ENCODE measurements at regions of chr14 and their contacts with region 1.

Region 1: GRCh38 chr14:55446218-55446654 is 5.8 kb upstream of the TBPL2 start:
- DNase-seq: peak; percentile 42
- H3K4me3 ChIP-seq: no peak overlapping the region
- H3K27ac ChIP-seq: peak overlapping the region; percentile 55
- H3K27me3 ChIP-seq: no peaks in the 10 kb centered on the region
- CTCF ChIP-seq: peak; percentile 80

Region 2: GRCh38 chr14:54329082-54329695 is 1117.0 kb before region 1 on chr14:
- CTCF ChIA-PET with region 1: no interaction called
- POLR2A ChIA-PET with region 1: no interaction called
- DNase-seq: no peak
- H3K4me3 ChIP-seq: no peak overlapping the region
- H3K27ac ChIP-seq: no peak overlapping the region
- H3K27me3 ChIP-seq: peaks cover 26% of the 10 kb centered on the region
- CTCF ChIP-seq: peak; percentile 91

Region 3: GRCh38 chr14:54566410-54567223 is 879.6 kb before region 1 on chr14 and contains the start of gene SAMD4A:
- CTCF ChIA-PET with region 1: no interaction called
- POLR2A ChIA-PET with region 1: no interaction called
- DNase-seq: peak; percentile 71
- H3K4me3 ChIP-seq: peak within 1 kb of the TSS; percentile 80
- H3K27ac ChIP-seq: peak within 1 kb of the TSS; percentile 86
- H3K27me3 ChIP-seq: no peaks in the 10 kb centered on the region
- CTCF ChIP-seq: peak; percentile 46
- polyA plus RNA-seq, gene SAMD4A: 12.7 and 21.0 TPM in 2 replicates

Region 4: GRCh38 chr14:55062517-55063351 is 383.5 kb before region 1 on chr14:
- CTCF ChIA-PET with region 1: no interaction called
- POLR2A ChIA-PET with region 1: no interaction called
- DNase-seq: no peak
- H3K4me3 ChIP-seq: no peak overlapping the region
- H3K27ac ChIP-seq: no peak overlapping the region
- H3K27me3 ChIP-seq: no peaks in the 10 kb centered on the region
- CTCF ChIP-seq: no peak

Region 5: DNA sequence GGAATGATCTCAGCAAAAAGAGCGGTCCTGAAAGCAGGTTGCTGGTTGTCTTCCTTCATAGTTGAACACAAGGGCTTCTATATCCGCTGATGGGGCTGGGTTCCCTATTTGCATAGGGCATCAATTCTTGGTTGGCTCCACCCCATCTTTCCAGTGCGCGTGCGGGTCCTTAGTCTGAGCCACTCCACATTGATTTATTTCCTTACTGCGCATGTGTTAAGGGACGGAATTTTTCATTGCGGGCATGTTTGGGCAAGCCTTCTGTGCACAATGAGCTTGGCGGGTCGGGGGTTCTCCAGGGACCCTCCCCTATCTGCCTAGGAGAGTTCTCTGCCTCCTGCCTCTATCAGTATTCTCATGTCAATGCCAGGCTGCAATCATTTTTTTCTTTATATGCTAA is 233.6 kb before region 1 on chr14:
- CTCF ChIA-PET with region 1: interaction called, 21 read pairs
- POLR2A ChIA-PET with region 1: no interaction called
- DNase-seq: no peak
- H3K4me3 ChIP-seq: no peak overlapping the region
- H3K27ac ChIP-seq: no peak overlapping the region
- H3K27me3 ChIP-seq: no peaks in the 10 kb centered on the region
- CTCF ChIP-seq: no peak

Region 6: GRCh38 chr14:55540847-55541766 is 94.9 kb after region 1 on chr14:
- CTCF ChIA-PET with region 1: interaction called, 12 read pairs
- POLR2A ChIA-PET with region 1: no interaction called
- DNase-seq: no peak
- H3K4me3 ChIP-seq: no peak overlapping the region
- H3K27ac ChIP-seq: no peak overlapping the region
- H3K27me3 ChIP-seq: no peaks in the 10 kb centered on the region
- CTCF ChIP-seq: no peak

Region 7: GRCh38 chr14:55588259-55588699 is 142.0 kb after region 1 on chr14:
- CTCF ChIA-PET with region 1: interaction called, 18 read pairs
- POLR2A ChIA-PET with region 1: no interaction called
- DNase-seq: no peak
- H3K4me3 ChIP-seq: no peak overlapping the region
- H3K27ac ChIP-seq: no peak overlapping the region
- H3K27me3 ChIP-seq: no peaks in the 10 kb centered on the region
- CTCF ChIP-seq: no peak

Region 8: GRCh38 chr14:55614304-55614703 is 168.1 kb after region 1 on chr14:
- CTCF ChIA-PET with region 1: interaction called, 10 read pairs
- POLR2A ChIA-PET with region 1: no interaction called
- DNase-seq: no peak
- H3K4me3 ChIP-seq: no peak overlapping the region
- H3K27ac ChIP-seq: no peak overlapping the region
- H3K27me3 ChIP-seq: no peaks in the 10 kb centered on the region
- CTCF ChIP-seq: no peak

Region 9: DNA sequence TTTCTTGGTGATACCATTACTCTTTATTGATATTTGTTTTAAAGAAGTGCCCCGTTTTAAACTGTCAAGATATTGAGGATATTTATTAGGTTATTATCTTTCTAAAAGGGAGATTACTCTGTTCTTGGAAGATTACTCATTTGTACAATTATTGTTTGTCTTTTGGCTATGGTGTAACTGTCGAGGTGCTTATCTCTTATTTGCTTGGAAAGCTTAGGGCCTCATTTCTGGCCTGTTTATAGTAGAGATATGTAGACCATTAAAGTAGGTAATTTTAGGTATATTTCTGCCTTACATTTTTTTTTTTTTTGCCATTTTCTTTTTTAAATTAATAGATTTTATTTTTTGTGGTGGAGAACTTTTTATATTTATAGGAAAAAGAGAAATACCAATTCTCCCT is 208.0 kb after region 1 on chr14:
- CTCF ChIA-PET with region 1: interaction called, 12 read pairs
- POLR2A ChIA-PET with region 1: no interaction called
- DNase-seq: no peak
- H3K4me3 ChIP-seq: no peak overlapping the region
- H3K27ac ChIP-seq: no peak overlapping the region
- H3K27me3 ChIP-seq: no peaks in the 10 kb centered on the region
- CTCF ChIP-seq: no peak

Region 10: GRCh38 chr14:56491299-56492285 is 1045.4 kb after region 1 on chr14:
- CTCF ChIA-PET with region 1: interaction called, 21 read pairs
- POLR2A ChIA-PET with region 1: no interaction called
- DNase-seq: peak; percentile 16
- H3K4me3 ChIP-seq: no peak overlapping the region; the same call in 1 of the 2 replicates
- H3K27ac ChIP-seq: no peak overlapping the region
- H3K27me3 ChIP-seq: no peaks in the 10 kb centered on the region
- CTCF ChIP-seq: peak; percentile 86

Measured in AG04450 (cell line).